ENCODE measurements at regions of chr16 and their contacts with region 1.

Region 1: DNA sequence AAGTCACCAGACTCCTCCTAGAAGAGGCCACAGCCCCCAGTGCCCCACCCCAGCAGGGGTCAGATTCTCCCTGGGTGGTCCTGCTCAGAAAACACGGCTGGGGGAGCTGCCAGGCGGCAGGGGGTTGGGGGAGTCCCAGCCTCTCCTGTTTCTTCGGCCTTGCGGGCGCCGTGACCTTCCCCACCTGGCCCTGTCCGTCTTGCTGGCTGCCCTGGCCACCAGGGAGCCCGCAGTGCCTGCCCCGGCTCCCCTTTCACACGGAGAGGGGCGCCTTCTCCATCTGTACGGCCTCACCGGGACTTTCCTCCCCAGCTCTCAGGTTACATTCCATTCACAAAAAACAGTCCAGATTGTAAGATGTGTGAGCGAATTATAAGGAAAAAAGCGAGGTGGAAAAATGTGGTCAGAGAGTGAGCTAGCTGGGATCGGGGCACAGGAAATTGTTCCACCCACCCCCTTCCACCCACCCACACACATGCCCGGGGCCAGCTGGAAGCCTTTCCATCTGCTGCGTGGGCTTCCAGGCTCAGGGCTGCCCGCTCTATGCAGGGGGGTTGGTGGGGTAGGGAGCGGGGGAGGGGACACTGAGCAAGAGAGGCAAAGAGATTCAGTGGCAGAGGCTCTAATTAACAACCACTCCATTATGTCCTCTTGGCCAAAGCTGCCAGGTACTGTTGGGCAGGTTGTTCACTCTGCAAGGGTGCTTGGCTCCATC is 14.6 kb upstream of the CIBAR2 start:
- DNase-seq: no peak
- H3K4me3 ChIP-seq: no peak overlapping the region
- H3K27ac ChIP-seq: peak overlapping the region; percentile 47
- H3K4me1 ChIP-seq: peaks cover 58% of the 10 kb centered on the region
- H3K27me3 ChIP-seq: no peaks in the 10 kb centered on the region
- CTCF ChIP-seq: no peak
- POLR2A ChIP-seq: no peak

Region 2: DNA sequence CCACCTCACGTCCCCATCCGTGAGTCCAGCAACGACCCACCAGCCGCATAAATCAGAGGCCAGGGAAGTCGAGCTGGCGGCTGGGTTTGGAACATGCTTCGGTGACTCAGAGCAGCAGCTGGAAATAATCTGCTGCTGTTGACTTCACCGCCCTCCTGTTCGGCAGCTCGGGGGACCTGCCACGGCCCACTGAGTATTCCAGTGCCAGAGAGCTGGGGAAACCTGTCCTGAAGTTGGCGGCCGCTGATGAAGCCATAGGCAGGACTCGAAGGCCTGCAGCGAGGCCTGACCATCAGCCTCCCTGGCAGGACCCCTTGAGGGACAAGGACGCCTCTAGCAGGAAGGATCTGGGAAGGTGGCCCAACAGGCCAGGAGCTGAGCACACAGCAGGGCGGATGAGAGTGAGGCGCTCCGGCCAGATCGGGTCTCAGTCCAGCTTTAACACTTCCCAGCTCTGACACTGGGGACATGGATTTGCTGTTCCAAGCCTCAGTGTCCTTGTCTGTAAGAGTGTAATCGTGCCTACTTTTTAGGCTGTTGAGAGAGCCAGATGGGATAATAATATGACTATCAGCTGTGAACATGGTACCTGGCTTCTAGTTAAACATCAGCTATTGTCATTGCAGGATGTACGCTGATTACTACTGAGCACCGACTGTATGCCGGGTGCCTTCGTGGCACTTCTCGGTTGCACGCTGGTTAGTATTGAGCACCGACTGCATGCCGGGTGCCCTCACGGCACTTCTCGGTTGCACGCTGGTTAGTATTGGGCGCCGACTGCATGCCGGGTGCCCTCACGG is 35.8 kb after region 1 on chr16:
- intact Hi-C with region 1: loop called (anchors 5 kb)
- DNase-seq: no peak
- H3K4me3 ChIP-seq: no peak overlapping the region
- H3K27ac ChIP-seq: peak overlapping the region; percentile 77
- H3K4me1 ChIP-seq: peaks cover 50% of the 10 kb centered on the region
- H3K27me3 ChIP-seq: no peaks in the 10 kb centered on the region
- CTCF ChIP-seq: no peak
- POLR2A ChIP-seq: no peak

Region 3: GRCh38 chr16:85234310-85235204 is 107.7 kb after region 1 on chr16:
- intact Hi-C with region 1: loop called (anchors 10 kb)
- DNase-seq: no peak
- H3K4me3 ChIP-seq: peak overlapping the region; percentile 35 to 54
- H3K27ac ChIP-seq: peak overlapping the region; percentile 77
- H3K4me1 ChIP-seq: peaks cover 62% of the 10 kb centered on the region
- H3K27me3 ChIP-seq: no peaks in the 10 kb centered on the region
- CTCF ChIP-seq: no peak
- POLR2A ChIP-seq: no peak

Measured in vagina (tissue), 2 donors.